Mammary epithelial cell (primary cell): ENCODE measurements at regions of chr17 and their contacts with region 1.

Region 1: DNA sequence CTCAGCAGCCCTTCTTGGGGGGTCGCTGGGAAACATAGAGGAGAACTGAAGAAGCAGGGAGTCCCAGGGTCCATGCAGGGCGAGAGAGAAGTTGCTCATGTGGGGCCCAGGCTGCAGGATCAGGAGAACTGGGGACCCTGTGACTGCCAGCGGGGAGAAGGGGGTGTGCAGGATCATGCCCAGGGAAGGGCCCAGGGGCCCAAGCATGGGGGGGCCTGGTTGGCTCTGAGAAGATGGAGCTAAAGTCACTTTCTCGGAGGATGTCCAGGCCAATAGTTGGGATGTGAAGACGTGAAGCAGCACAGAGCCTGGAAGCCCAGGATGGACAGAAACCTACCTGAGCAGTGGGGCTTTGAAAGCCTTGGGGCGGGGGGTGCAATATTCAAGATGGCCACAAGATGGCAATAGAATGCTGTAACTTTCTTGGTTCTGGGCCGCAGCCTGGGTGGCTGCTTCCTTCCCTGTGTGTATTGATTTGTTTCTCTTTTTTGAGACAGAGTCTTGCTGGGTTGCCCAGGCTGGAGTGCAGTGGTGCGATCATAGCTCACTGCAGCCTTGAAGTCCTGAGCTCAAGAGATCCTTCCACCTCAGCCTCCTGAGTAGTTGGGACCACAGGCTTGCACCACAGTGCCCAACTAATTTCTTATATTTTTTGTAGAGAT is 3.4 kb downstream of the STH start:
- DNase-seq: peak; percentile 41
- H3K4me3 ChIP-seq: no peak overlapping the region
- H3K27ac ChIP-seq: no peak overlapping the region
- H3K4me1 ChIP-seq: no peaks in the 10 kb centered on the region
- H3K27me3 ChIP-seq: no peaks in the 10 kb centered on the region
- CTCF ChIP-seq: peak; percentile 83 to 88

Region 2: GRCh38 chr17:45923511-45924268 is 78.8 kb before region 1 on chr17:
- CTCF ChIA-PET with region 1: no interaction called
- dilution Hi-C with region 1: loop called (anchors 5 kb)
- in situ Hi-C with region 1: no loop called
- intact Hi-C with region 1: no loop called
- DNase-seq: no peak
- H3K4me3 ChIP-seq: no peak overlapping the region
- H3K27ac ChIP-seq: no peak overlapping the region
- H3K4me1 ChIP-seq: no peaks in the 10 kb centered on the region
- H3K27me3 ChIP-seq: peaks cover 13% of the 10 kb centered on the region
- CTCF ChIP-seq: no peak

Region 3: DNA sequence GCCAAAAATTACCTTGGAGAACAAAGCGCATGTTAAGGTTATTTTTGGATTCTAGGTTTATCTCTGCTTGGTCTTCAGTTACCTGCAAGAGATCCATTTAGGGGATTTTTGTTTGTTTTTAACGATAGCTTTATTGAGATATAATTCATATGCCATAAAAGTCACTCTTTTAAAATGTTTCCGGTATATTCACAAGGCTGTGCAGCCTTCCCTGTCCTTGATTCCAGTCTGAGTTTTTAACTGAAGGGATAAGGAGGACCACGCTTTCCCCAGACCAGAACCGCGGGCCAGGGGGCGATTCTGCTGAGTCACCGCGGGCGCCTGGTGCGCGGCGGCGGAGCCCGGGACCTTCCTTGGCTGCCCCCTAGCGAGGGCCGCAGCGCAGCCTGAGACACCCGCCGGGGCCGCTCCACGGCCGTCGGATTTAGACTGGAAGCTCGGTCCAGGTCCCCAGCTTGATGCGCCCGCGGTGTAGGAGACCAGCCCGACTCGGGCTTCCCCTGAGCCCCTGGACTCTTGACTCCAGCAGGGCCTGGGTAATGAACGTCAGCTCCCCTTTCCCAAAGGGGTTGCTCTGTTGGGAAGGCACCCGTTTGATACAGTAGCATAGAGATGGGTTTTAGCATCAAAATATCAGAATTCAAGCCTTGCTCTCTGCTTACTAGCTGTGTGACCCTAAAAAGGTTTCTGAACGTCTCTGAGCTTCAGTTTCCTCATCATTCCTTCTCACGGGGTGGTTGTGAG is 53.4 kb before region 1 on chr17:
- CTCF ChIA-PET with region 1: no interaction called
- dilution Hi-C with region 1: loop called (anchors 5 kb)
- in situ Hi-C with region 1: no loop called
- intact Hi-C with region 1: no loop called
- DNase-seq: peak; percentile 40
- H3K4me3 ChIP-seq: peak overlapping the region in 1 of 3 experiments; percentile 15
- H3K27ac ChIP-seq: no peak overlapping the region
- H3K4me1 ChIP-seq: no peaks in the 10 kb centered on the region
- H3K27me3 ChIP-seq: no peaks in the 10 kb centered on the region
- CTCF ChIP-seq: peak; percentile 47 to 77

Region 4: GRCh38 chr17:46063240-46063639 is 60.8 kb after region 1 on chr17:
- CTCF ChIA-PET with region 1: no interaction called
- dilution Hi-C with region 1: no loop called
- in situ Hi-C with region 1: no loop called
- intact Hi-C with region 1: no loop called
- DNase-seq: peak; percentile 86
- H3K4me3 ChIP-seq: no peak overlapping the region
- H3K27ac ChIP-seq: peak overlapping the region; percentile 80
- H3K4me1 ChIP-seq: peaks cover 9% of the 10 kb centered on the region
- H3K27me3 ChIP-seq: no peaks in the 10 kb centered on the region
- CTCF ChIP-seq: no peak

Region 5: GRCh38 chr17:46212634-46213435 is 210.4 kb after region 1 on chr17:
- CTCF ChIA-PET with region 1: no interaction called
- dilution Hi-C with region 1: no loop called
- in situ Hi-C with region 1: no loop called
- intact Hi-C with region 1: loop called (anchors 1 kb)
- DNase-seq: peak; percentile 46
- H3K4me3 ChIP-seq: no peak overlapping the region
- H3K27ac ChIP-seq: no peak overlapping the region
- H3K4me1 ChIP-seq: no peaks in the 10 kb centered on the region
- H3K27me3 ChIP-seq: no peaks in the 10 kb centered on the region
- CTCF ChIP-seq: peak; percentile 60 to 66

Region 6: GRCh38 chr17:46832945-46833839 is 830.8 kb after region 1 on chr17:
- CTCF ChIA-PET with region 1: no interaction called
- dilution Hi-C with region 1: no loop called
- in situ Hi-C with region 1: no loop called
- intact Hi-C with region 1: loop called (anchors 10 kb)
- DNase-seq: no peak
- H3K4me3 ChIP-seq: no peak overlapping the region
- H3K27ac ChIP-seq: no peak overlapping the region
- H3K4me1 ChIP-seq: no peaks in the 10 kb centered on the region
- H3K27me3 ChIP-seq: peaks cover 1% of the 10 kb centered on the region
- CTCF ChIP-seq: no peak

Region 7: GRCh38 chr17:46995841-46996571 is 993.6 kb after region 1 on chr17:
- CTCF ChIA-PET with region 1: no interaction called
- dilution Hi-C with region 1: no loop called
- in situ Hi-C with region 1: no loop called
- intact Hi-C with region 1: loop called (anchors 2 kb)
- DNase-seq: peak; percentile 57
- H3K4me3 ChIP-seq: no peak overlapping the region
- H3K27ac ChIP-seq: no peak overlapping the region
- H3K4me1 ChIP-seq: no peaks in the 10 kb centered on the region
- H3K27me3 ChIP-seq: no peaks in the 10 kb centered on the region
- CTCF ChIP-seq: no peak